IMR-90 (cell line): ENCODE measurements at regions of chr13 and their contacts with region 1.

Region 1: GRCh38 chr13:74217811-74218210 is 83.6 kb upstream of the KLF12 start:
- DNase-seq: peak; percentile 97
- ATAC-seq: peak; percentile 95
- H3K4me3 ChIP-seq: no peak overlapping the region
- H3K27ac ChIP-seq: no peak overlapping the region
- H3K4me1 ChIP-seq: peaks cover 15% of the 10 kb centered on the region
- H3K27me3 ChIP-seq: no peaks in the 10 kb centered on the region
- CTCF ChIP-seq: no peak
- POLR2A ChIP-seq: no peak
- RAD21 ChIP-seq: no peak

Region 2: GRCh38 chr13:74047939-74048600 is 169.7 kb before region 1 on chr13:
- CTCF ChIA-PET with region 1: no interaction called
- POLR2A ChIA-PET with region 1: no interaction called
- dilution Hi-C with region 1: no loop called
- in situ Hi-C with region 1: no loop called
- intact Hi-C with region 1: loop called (anchors 5 kb)
- DNase-seq: no peak
- ATAC-seq: peak; percentile 71
- H3K4me3 ChIP-seq: no peak overlapping the region
- H3K27ac ChIP-seq: no peak overlapping the region
- H3K4me1 ChIP-seq: peaks cover 12% of the 10 kb centered on the region
- H3K27me3 ChIP-seq: no peaks in the 10 kb centered on the region
- CTCF ChIP-seq: no peak
- POLR2A ChIP-seq: no peak
- RAD21 ChIP-seq: no peak

Region 3: DNA sequence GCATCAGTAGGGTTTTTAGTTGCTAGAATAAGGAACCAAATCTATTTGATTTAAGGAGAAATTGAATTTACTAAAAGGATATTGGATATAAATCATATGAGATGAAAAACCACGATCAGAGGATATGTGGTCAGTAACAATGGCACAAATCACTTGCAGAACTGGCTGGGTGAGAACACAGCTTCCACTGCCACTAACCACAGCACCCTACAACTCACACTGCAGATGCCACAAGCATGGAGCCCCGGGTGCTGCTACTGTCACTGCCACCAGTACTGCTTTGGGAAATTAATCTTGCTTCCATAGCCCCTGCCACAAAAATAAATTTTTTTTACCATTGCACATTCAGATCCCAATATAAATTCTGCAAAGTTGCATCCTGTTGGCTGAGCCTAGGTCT is 43.0 kb before region 1 on chr13:
- CTCF ChIA-PET with region 1: no interaction called
- POLR2A ChIA-PET with region 1: no interaction called
- dilution Hi-C with region 1: no loop called
- in situ Hi-C with region 1: no loop called
- intact Hi-C with region 1: no loop called
- DNase-seq: no peak
- ATAC-seq: no peak
- H3K4me3 ChIP-seq: no peak overlapping the region
- H3K27ac ChIP-seq: no peak overlapping the region
- H3K4me1 ChIP-seq: no peaks in the 10 kb centered on the region
- H3K27me3 ChIP-seq: no peaks in the 10 kb centered on the region
- CTCF ChIP-seq: no peak
- POLR2A ChIP-seq: no peak
- RAD21 ChIP-seq: no peak

Region 4: GRCh38 chr13:74270018-74270417 is 52.2 kb after region 1 on chr13:
- CTCF ChIA-PET with region 1: no interaction called
- POLR2A ChIA-PET with region 1: no interaction called
- dilution Hi-C with region 1: no loop called
- in situ Hi-C with region 1: no loop called
- intact Hi-C with region 1: loop called (anchors 5 kb)
- DNase-seq: peak; percentile 10
- ATAC-seq: no peak
- H3K4me3 ChIP-seq: no peak overlapping the region
- H3K27ac ChIP-seq: no peak overlapping the region
- H3K4me1 ChIP-seq: peaks cover 2% of the 10 kb centered on the region
- H3K27me3 ChIP-seq: no peaks in the 10 kb centered on the region
- CTCF ChIP-seq: no peak
- POLR2A ChIP-seq: no peak
- RAD21 ChIP-seq: no peak

Region 5: DNA sequence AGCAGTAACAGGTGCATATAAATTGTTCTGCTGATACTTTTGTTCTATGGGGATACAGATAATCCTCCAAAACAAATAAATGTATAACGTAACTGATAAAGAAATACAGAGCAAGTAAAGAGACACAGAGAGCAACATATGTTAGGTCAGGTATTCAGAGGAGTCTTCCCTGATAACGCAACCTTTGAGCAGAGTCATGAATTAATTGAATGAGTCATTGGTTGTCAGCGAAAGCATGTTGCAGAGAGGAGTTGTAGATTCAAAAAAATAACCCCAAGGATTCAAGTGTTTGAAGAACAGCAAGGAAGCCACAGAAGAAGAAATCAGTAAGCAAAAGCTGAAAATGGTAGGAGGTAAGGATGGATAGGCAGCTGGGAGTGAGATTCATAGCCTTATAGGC is 1019.0 kb after region 1 on chr13:
- CTCF ChIA-PET with region 1: no interaction called
- POLR2A ChIA-PET with region 1: no interaction called
- dilution Hi-C with region 1: no loop called
- in situ Hi-C with region 1: no loop called
- intact Hi-C with region 1: no loop called
- DNase-seq: no peak
- ATAC-seq: no peak
- H3K4me3 ChIP-seq: no peak overlapping the region
- H3K27ac ChIP-seq: no peak overlapping the region
- H3K4me1 ChIP-seq: no peaks in the 10 kb centered on the region
- H3K27me3 ChIP-seq: peaks cover 4% of the 10 kb centered on the region; the same call in 1 of the 2 replicates
- CTCF ChIP-seq: no peak
- POLR2A ChIP-seq: no peak
- RAD21 ChIP-seq: no peak